Activated naive CD4-positive, alpha-beta T cell treated with anti-CD3 and anti-CD28 coated beads, Interleukin-2, amount 10 ng/mL, durations not matched to agents 7 days and 5 days (primary cell): ENCODE measurements at regions of chr6 and their contacts with region 1.

Region 1: GRCh38 chr6:36094753-36095496 is 35.4 kb upstream of the MAPK13 start:
- DNase-seq: peak; percentile 85
- H3K4me3 Mint-ChIP-seq: no peak overlapping the region
- H3K27ac Mint-ChIP-seq: peak overlapping the region; percentile 11
- H3K4me1 Mint-ChIP-seq: peaks cover 31% of the 10 kb centered on the region
- H3K27me3 Mint-ChIP-seq: no peaks in the 10 kb centered on the region

Region 2: GRCh38 chr6:36083446-36083845 is 11.5 kb before region 1 on chr6:
- CTCF ChIA-PET with region 1: interaction called, 21 read pairs
- DNase-seq: no peak
- H3K4me3 Mint-ChIP-seq: no peak overlapping the region
- H3K27ac Mint-ChIP-seq: no peak overlapping the region
- H3K4me1 Mint-ChIP-seq: no peaks in the 10 kb centered on the region
- H3K27me3 Mint-ChIP-seq: no peaks in the 10 kb centered on the region

Region 3: DNA sequence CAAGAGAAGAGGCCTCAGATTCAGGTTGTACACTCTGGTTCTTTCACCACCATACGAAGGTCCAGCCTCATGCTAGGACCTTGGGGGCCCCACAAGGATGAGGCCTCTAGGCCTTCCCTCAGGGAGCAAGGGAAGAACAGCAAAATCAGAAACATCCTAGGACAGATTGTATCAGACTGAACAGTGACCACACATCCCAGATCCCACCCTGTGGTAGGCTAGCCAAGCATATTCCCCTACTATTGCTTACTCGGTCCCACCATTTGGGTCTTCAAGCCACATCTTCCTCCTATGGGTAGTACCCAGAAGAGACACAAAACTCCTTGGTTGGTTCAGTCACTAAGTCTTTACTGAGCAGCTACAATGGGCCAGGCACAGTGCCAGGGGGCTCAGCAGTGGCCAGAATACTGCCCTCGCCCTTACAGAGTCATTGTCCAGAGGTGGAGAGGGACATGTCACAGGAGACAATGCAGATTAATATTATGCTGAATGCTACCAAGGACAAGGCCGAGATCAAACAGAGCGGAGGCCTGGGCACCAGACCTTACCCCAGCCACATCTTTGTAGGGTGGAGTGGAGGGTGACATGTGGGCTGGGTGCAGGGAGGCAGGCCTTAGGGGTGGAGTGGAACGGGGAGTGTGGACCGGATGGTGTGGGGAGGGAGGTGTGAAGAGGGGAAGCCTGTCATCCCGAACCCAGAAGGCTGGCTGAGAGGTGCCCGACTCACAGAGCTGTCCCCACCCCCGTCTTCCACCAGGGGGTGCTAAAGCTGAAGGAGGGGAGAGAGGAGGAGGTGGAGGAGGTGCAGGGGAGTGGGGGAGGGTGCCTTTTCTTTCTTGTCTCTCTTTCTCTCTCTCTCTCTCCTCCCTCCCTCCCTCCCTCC is 28.6 kb after region 1 on chr6:
- CTCF ChIA-PET with region 1: interaction called, 20 read pairs
- DNase-seq: peak; percentile 93
- H3K4me3 Mint-ChIP-seq: peak overlapping the region; percentile 10
- H3K27ac Mint-ChIP-seq: peak overlapping the region; percentile 72
- H3K4me1 Mint-ChIP-seq: peaks cover 84% of the 10 kb centered on the region
- H3K27me3 Mint-ChIP-seq: no peaks in the 10 kb centered on the region